ENCODE measurements at regions of chr2 and their contacts with region 1.

Region 1: GRCh38 chr2:181393472-181393871 is 63.7 kb upstream of the ITGA4 start:
- DNase-seq: peak; percentile 67
- H3K4me3 Mint-ChIP-seq: peak overlapping the region; percentile 42
- H3K27ac Mint-ChIP-seq: peak overlapping the region; percentile 82
- H3K4me1 Mint-ChIP-seq: peaks cover 24% of the 10 kb centered on the region
- H3K27me3 Mint-ChIP-seq: no peaks in the 10 kb centered on the region

Region 2: DNA sequence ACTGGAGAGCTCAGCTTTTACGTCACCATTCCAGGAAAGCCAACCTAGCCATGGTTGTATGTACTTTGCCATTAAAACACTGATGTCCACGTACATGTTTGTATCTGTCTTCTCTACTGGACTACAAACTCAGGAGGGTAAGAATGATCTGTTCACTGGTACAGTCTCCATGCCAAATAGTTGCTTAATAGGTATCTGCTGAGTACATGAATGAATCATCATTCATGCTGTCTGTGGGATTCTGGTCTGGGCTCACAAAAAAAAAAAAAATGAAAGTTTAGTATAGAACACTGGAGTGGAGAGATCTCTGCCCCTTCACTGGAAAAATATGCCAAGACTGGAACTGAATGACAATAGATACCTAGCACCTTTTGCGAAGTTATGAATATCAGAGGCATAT is 38.8 kb before region 1 on chr2:
- intact Hi-C with region 1: loop called (anchors 5 kb)
- DNase-seq: no peak
- H3K4me3 Mint-ChIP-seq: no peak overlapping the region
- H3K27ac Mint-ChIP-seq: no peak overlapping the region
- H3K4me1 Mint-ChIP-seq: peaks cover 14% of the 10 kb centered on the region
- H3K27me3 Mint-ChIP-seq: no peaks in the 10 kb centered on the region

Region 3: DNA sequence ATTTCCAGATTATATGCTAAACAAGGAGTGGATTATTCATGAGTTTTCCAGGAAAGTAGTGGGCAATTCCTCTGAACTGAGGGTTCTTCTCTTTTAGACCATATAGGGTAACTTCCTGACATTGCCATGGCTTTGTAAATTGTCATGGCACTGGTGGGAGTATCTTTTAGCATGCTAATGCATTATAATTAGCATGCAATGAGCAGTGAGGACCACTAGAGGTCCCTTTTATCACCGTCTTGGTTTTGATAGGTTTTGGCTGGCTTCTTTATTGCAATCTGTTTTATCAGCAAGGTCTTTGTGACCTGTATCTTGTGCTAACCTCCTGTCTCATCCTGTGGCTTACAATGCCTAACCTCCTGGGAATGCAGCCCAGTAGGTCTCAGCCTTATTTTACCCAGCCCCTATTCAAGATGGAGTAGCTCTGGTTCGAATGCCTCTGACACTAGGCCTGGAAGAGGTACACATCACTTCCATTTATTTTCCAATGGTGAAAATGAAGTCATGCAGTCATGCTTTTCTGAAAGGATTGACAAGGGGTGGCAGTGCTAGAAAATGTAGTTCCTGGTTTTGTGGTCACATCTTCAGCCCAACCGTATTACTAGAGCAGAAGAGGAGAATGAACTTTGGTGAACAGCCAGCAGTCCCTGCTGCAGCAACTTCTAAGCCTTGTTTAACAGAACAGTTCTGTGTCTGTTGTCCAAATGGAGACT is 37.1 kb after region 1 on chr2:
- intact Hi-C with region 1: loop called (anchors 5 kb)
- DNase-seq: peak; percentile 62
- H3K4me3 Mint-ChIP-seq: no peak overlapping the region
- H3K27ac Mint-ChIP-seq: peak overlapping the region; percentile 47
- H3K4me1 Mint-ChIP-seq: peaks cover 12% of the 10 kb centered on the region
- H3K27me3 Mint-ChIP-seq: no peaks in the 10 kb centered on the region

Region 4: GRCh38 chr2:181891966-181892798 is 498.7 kb after region 1 on chr2:
- intact Hi-C with region 1: no loop called
- DNase-seq: peak; percentile 91
- H3K4me3 Mint-ChIP-seq: peak overlapping the region; percentile 100
- H3K27ac Mint-ChIP-seq: peak overlapping the region; percentile 97
- H3K4me1 Mint-ChIP-seq: peaks cover 29% of the 10 kb centered on the region
- H3K27me3 Mint-ChIP-seq: peaks cover 27% of the 10 kb centered on the region

Measured in activated CD4-positive, alpha-beta T cell treated with anti-CD3 and anti-CD28 coated beads, Interleukin-2, amount 10 ng/mL, durations not matched to agents 24 days and 14 days (primary cell).